Sigmoid colon (tissue), 7 donors: ENCODE measurements at regions of chr19 and their contacts with region 1.

Region 1: DNA sequence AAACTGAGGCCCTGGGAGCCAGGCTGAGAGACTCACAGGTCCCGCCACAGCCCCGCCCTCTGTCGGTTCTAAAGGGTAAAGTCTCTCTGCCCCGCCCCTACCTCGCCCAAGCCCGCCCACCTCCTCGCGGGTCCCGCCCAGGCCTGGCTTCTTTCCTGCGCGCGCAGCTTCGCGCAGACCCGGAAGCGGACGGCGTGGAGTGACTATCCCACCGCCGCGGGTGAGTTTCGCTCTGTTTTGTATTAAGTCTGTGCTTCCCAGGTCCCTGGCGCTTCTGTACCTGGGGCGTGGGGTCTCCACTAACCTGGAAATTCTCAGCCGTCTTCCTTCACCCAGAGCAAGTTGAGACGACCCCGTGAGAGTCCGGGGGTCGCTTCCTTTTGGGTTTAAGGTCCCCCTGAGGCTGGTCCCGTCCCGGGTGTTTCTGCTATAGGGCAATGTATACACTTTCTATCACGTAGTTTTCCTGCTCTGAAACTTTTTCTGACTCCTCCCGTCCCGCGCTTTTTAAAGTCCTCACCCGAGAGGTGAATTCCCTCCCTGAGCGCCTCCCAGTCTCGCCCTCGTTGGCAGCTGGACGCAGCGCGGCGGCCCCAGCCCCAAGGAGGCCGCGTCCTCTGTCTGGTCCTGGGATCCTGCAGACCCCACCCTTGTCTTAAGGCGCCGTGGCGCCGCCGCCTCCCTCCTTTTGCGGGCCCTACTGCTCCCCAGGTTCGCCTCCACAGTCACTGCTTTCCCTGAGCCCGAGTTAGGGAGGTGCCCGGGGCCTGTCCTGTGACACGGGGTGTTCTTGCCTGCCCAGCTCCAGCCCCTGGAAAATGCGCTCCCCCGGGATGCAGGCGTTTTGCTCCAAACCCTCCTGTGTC is at the start of gene ZNF765:
- DNase-seq: peak; percentile 98
- H3K4me3 ChIP-seq: peak within 1 kb of the TSS; percentile 73 to 89 (median 78)
- H3K27ac ChIP-seq: peak within 1 kb of the TSS; percentile 79 to 92 (median 86)
- H3K4me1 ChIP-seq: peaks cover 0 to 22% (median 21%) of the 10 kb centered on the region in 4 donors
- H3K27me3 ChIP-seq: no peaks in the 10 kb centered on the region
- CTCF ChIP-seq: peak in 3 of 4 experiments; percentile 47 to 54 (median 52)
- EP300 ChIP-seq: no peak
- POLR2A ChIP-seq: peak; percentile 62 to 67
- total RNA-seq, gene ZNF765: 6.2 to 13.0 (median 11.7) TPM

Region 2: DNA sequence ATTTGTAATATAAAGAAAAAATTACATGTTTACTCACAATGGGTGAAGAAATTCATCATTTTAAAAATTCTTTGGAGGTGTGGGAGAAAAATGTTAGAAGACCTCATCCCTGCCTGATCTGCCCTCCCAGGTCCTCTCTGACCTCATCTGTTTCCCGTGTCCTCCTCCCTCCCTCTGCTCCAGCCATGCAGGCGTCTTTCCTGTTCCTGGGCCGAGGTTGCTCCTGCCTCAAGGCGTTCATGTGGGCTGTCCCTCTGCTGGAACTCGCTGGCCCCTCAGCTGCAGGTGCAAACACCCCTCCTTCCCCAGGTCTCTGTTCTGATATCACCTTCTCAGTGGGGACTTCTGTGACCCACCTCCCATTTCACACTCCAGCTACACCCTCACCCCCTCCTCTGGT is 54.6 kb before region 1 on chr19:
- intact Hi-C with region 1: no loop called
- DNase-seq: no peak
- H3K4me3 ChIP-seq: no peak overlapping the region
- H3K27ac ChIP-seq: no peak overlapping the region
- H3K4me1 ChIP-seq: no peaks in the 10 kb centered on the region
- H3K27me3 ChIP-seq: no peaks in the 10 kb centered on the region
- CTCF ChIP-seq: no peak
- EP300 ChIP-seq: no peak
- POLR2A ChIP-seq: no peak

Region 3: GRCh38 chr19:53365134-53365898 is 29.9 kb before region 1 on chr19 and contains the start of gene ZNF525:
- intact Hi-C with region 1: loop called (anchors 2 kb)
- DNase-seq: peak; percentile 94
- H3K4me3 ChIP-seq: peak within 1 kb of the TSS; percentile 59 to 74 (median 67)
- H3K27ac ChIP-seq: peak within 1 kb of the TSS; percentile 71 to 84 (median 76)
- H3K4me1 ChIP-seq: peaks cover 0 to 13% (median 3%) of the 10 kb centered on the region in 4 donors
- H3K27me3 ChIP-seq: no peaks in the 10 kb centered on the region
- CTCF ChIP-seq: peak in 1 of 4 experiments; percentile 16
- EP300 ChIP-seq: no peak
- POLR2A ChIP-seq: peak; percentile 16 to 53
- total RNA-seq, gene ZNF525: 6.3 to 8.3 (median 7.0) TPM

Region 4: GRCh38 chr19:53485046-53486004 is 90.1 kb after region 1 on chr19:
- intact Hi-C with region 1: no loop called
- DNase-seq: no peak
- H3K4me3 ChIP-seq: no peak overlapping the region
- H3K27ac ChIP-seq: no peak overlapping the region
- H3K4me1 ChIP-seq: no peaks in the 10 kb centered on the region
- H3K27me3 ChIP-seq: no peaks in the 10 kb centered on the region
- CTCF ChIP-seq: no peak
- EP300 ChIP-seq: no peak
- POLR2A ChIP-seq: no peak